Activated T-helper 2 cell treated with anti-CD3 and anti-CD28 coated beads, Interferon-gamma antibody, Interleukin-2, Interleukin-4, amounts not matched to agents 10 μg/mL and 5 μg/mL and 100 μg/mL, durations not matched to agents 14 hours and 24 hours and 36 hours (primary cell): ENCODE measurements at regions of chr2 and their contacts with region 1.

Region 1: GRCh38 chr2:202703091-202703490 is 68.3 kb downstream of the FAM117B start:
- DNase-seq: no peak
- H3K4me3 Mint-ChIP-seq: no peak overlapping the region
- H3K27ac Mint-ChIP-seq: peak overlapping the region; percentile 60
- H3K4me1 Mint-ChIP-seq: peaks cover 43% of the 10 kb centered on the region
- H3K27me3 Mint-ChIP-seq: no peaks in the 10 kb centered on the region

Region 2: DNA sequence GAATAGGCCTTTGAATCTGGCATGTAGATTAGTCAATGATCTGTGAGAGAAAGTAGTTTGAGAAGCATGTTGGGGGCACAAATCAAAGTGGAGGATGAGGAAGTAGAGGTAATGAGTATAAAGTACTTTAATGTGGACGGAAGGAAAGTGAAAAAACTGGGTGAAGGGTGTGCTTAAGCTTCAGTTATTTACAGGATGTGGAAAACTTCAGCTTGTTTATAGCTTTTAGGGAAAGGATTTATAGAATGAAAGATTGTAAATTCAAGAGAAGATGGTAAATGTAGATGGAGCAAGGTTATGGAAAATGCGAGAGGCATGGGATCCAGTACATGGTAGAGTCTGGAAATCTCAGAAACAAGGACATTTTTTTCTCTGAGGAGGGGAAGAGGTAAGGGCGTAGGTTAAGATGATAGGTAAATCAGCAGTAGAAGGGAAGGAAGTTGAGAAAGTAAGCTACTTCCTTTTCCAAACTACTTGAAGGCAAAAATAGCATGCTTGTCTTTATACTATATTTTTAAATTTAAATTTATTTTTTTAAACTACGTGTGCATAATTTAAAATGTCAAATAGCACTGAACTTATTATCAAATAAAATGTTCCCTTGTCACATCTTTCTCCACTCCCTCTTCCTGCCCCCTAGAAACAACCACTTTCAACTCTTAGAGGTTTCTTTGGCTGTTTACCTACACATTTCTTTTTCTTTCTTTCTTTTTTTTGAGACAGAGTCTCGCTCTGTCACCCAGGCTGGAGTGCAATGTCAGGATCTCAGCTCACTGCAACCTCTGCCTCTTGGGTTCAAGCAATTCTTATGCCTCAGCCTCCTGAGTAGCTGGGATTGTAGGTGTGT is 59.9 kb before region 1 on chr2:
- intact Hi-C with region 1: loop called (anchors 2 kb)
- DNase-seq: no peak
- H3K4me3 Mint-ChIP-seq: peak overlapping the region; percentile 51
- H3K27ac Mint-ChIP-seq: peak overlapping the region; percentile 85
- H3K4me1 Mint-ChIP-seq: peaks cover 44% of the 10 kb centered on the region
- H3K27me3 Mint-ChIP-seq: no peaks in the 10 kb centered on the region

Region 3: DNA sequence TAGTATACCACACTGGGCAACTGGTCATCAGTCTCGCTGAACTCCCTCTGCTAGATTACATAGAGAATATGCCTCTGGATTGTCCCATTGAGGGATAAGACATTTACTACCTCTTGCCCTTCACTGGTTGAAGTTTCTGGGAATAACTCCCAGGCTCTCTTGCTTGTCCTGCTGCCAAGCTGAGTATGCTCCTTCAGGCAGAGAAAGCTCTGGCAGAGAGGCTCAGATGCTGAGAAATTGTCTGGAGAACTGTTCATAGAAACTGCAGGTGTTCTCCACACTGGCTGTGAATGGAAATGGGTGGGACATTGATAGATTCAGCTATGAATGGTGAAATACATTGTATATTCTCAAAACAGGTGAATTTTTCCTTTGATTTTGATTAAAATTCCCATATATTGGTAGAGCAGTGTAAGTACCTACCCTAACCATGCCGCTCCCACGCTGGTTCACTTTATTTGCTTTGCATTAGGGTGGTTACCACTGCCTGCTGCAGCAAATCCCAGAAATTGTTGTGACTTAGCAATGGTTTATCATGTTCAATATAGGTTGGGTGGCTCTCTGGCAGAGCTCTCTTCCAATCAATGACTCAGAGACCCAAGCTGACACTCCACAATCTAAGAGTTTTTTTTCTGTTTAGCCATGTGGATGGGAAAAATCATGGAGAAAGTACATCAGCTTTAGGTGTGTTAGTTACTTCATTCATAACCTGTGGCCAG is 31.6 kb before region 1 on chr2:
- intact Hi-C with region 1: loop called (anchors 5 kb)
- DNase-seq: no peak
- H3K4me3 Mint-ChIP-seq: no peak overlapping the region
- H3K27ac Mint-ChIP-seq: no peak overlapping the region
- H3K4me1 Mint-ChIP-seq: peaks cover 37% of the 10 kb centered on the region
- H3K27me3 Mint-ChIP-seq: no peaks in the 10 kb centered on the region

Region 4: DNA sequence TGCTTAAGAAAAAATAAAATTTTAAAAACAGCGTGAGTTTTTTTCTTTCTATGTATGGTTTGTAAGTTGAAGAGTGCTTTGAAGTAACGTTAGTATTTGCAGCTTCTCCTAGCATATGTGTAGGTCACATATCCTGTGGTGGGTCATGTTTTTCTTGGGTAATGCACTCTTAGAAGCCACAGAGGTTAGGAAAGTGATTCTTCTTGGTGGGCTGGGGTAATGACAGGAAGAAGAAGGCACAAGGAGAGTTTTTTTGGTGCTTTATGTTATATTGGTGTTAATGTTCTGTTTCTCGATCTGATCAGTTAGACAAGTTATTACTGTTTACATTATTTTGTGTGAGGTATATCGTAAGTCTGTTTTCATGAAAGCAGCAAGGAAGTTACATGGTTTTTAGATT is 59.5 kb after region 1 on chr2:
- intact Hi-C with region 1: loop called (anchors 1 kb)
- DNase-seq: no peak
- H3K4me3 Mint-ChIP-seq: peak overlapping the region; percentile 28
- H3K27ac Mint-ChIP-seq: peak overlapping the region; percentile 75
- H3K4me1 Mint-ChIP-seq: peaks cover 32% of the 10 kb centered on the region
- H3K27me3 Mint-ChIP-seq: no peaks in the 10 kb centered on the region

Region 5: GRCh38 chr2:202780514-202781021 is 77.5 kb after region 1 on chr2:
- intact Hi-C with region 1: loop called (anchors 1 kb)
- DNase-seq: no peak
- H3K4me3 Mint-ChIP-seq: no peak overlapping the region
- H3K27ac Mint-ChIP-seq: peak overlapping the region; percentile 42
- H3K4me1 Mint-ChIP-seq: peaks cover 15% of the 10 kb centered on the region
- H3K27me3 Mint-ChIP-seq: no peaks in the 10 kb centered on the region